K562 (cell line): ENCODE measurements at regions of chr5 and their contacts with region 1.

Region 1: DNA sequence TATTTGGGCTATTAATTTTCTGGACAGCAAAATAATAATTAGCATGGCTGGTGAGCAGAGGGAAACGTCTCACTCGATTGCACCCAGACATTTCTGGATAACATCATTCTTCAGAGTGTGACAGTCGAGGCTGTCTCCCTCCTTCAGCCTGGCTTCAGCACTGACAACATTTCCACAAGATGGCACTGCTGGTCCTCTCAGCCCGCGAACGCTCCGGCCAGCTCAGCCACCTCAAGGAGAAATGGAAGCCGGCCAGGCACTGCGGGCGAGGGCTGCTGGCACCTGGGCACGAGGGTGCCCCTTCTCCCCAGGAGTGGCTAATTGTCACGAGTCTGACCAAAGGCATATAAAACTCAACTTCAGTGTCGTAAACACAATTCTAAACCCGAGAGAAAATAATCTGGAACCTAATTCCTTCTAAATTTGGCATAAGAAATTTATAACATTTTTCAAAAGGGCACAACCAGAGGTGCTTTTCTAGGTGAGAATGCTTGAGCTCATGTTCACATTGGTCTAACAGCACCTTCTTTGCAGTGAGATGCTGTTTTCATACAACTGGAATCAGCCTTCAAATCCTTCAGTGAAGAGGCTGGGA is 65.9 kb downstream of the DAP start:
- DNase-seq: peak in 2 of 4 experiments; percentile 63 to 74
- ATAC-seq: peak; percentile 93
- H3K4me3 ChIP-seq: no peak overlapping the region
- H3K27ac ChIP-seq: no peak overlapping the region
- H3K4me1 ChIP-seq: peaks cover 2 to 3% of the 10 kb centered on the region in 2 experiments; a peak in 3 of 5 replicates
- H3K27me3 ChIP-seq: no peaks in the 10 kb centered on the region
- CTCF ChIP-seq: peak; percentile 79 to 82 (median 80)
- EP300 ChIP-seq: no peak
- POLR2A ChIP-seq: no peak
- RAD21 ChIP-seq: peak; percentile 69 to 86

Region 2: GRCh38 chr5:10649666-10650380 is 45.3 kb before region 1 on chr5:
- CTCF ChIA-PET with region 1: no interaction called
- POLR2A ChIA-PET with region 1: no interaction called
- in situ Hi-C with region 1: no loop called
- intact Hi-C with region 1: no loop called
- DNase-seq: no peak
- ATAC-seq: no peak
- H3K4me3 ChIP-seq: no peak overlapping the region
- H3K27ac ChIP-seq: no peak overlapping the region
- H3K4me1 ChIP-seq: peaks cover 0 to 2% of the 10 kb centered on the region in 2 experiments; a peak in 1 of 5 replicates
- H3K27me3 ChIP-seq: peaks cover 45 to 71% of the 10 kb centered on the region in 2 experiments
- CTCF ChIP-seq: no peak
- EP300 ChIP-seq: no peak
- POLR2A ChIP-seq: no peak
- RAD21 ChIP-seq: no peak

Region 3: GRCh38 chr5:10987930-10988504 is 292.9 kb after region 1 on chr5:
- CTCF ChIA-PET with region 1: no interaction called
- POLR2A ChIA-PET with region 1: no interaction called
- in situ Hi-C with region 1: no loop called
- intact Hi-C with region 1: loop called (anchors 10 kb)
- DNase-seq: peak; percentile 71 to 83 (median 82)
- ATAC-seq: peak; percentile 99
- H3K4me3 ChIP-seq: no peak overlapping the region
- H3K27ac ChIP-seq: no peak overlapping the region
- H3K4me1 ChIP-seq: no peaks in the 10 kb centered on the region
- H3K27me3 ChIP-seq: peaks cover 21 to 29% of the 10 kb centered on the region in 2 experiments
- CTCF ChIP-seq: peak; percentile 86 to 95 (median 94)
- EP300 ChIP-seq: no peak
- POLR2A ChIP-seq: no peak
- RAD21 ChIP-seq: peak; percentile 52 to 84

Region 4: GRCh38 chr5:11177999-11178711 is 483.0 kb after region 1 on chr5:
- CTCF ChIA-PET with region 1: no interaction called
- POLR2A ChIA-PET with region 1: no interaction called
- in situ Hi-C with region 1: no loop called
- intact Hi-C with region 1: loop called (anchors 10 kb)
- DNase-seq: no peak
- ATAC-seq: no peak
- H3K4me3 ChIP-seq: no peak overlapping the region
- H3K27ac ChIP-seq: no peak overlapping the region
- H3K4me1 ChIP-seq: no peaks in the 10 kb centered on the region
- H3K27me3 ChIP-seq: no peaks in the 10 kb centered on the region
- CTCF ChIP-seq: no peak
- EP300 ChIP-seq: no peak
- POLR2A ChIP-seq: no peak
- RAD21 ChIP-seq: no peak